PC-3 (cell line): ENCODE measurements at regions of chr21 and their contacts with region 1.

Region 1: DNA sequence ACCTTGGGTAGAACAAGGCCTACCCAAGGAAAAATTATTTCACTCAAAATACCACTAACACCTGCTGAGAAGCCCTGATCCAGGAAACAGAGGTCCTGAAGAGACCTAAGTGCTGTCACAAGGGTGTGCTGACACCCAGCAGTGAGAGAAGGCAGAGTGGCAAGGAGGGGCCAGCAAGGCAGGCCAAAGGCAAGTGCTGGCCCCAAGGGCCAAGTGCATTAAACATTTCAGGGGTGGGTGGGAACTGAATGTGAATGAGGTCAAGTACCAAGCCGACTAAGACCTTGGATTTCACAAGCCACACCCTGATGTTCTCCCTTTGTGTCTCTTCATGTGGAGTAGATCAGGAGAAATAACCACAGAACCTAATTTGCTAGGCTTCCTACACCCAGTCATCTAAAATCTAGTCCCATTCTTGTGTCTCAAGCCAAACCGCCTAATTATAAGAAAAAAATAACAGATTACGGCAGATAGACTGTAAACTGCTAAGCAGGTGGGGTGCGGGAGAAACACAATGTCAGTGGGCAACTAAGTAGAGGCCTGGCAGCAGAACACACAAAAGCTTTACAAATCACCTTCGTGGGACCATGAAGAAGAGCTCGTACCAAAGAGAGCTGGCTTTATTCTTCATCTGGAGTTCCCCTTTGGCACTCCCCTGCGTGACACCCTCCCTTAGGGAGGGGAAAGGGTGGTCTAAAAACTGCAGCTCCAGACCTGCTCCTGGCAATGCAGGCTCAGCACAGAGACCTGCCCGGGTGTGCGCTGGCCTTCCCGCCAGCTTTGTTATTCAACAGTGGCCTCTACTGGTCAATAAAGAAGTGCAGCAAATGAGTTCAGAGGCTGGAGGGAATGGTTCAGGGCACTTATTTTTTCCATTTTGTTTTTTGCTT is 8.7 kb downstream of the UBE2G2 start:
- DNase-seq: peak; percentile 83
- ATAC-seq: peak; percentile 97
- H3K4me3 ChIP-seq: no peak overlapping the region
- H3K27ac ChIP-seq: no peak overlapping the region
- H3K4me1 ChIP-seq: peaks cover 10% of the 10 kb centered on the region; the same call in 1 of the 2 replicates
- H3K27me3 ChIP-seq: no peaks in the 10 kb centered on the region
- CTCF ChIP-seq: peak; percentile 90

Region 2: GRCh38 chr21:44510508-44511210 is 282.3 kb before region 1 on chr21:
- CTCF ChIA-PET with region 1: interaction called, 20 read pairs
- POLR2A ChIA-PET with region 1: no interaction called
- intact Hi-C with region 1: loop called (anchors 1 kb)
- DNase-seq: peak; percentile 88
- ATAC-seq: peak; percentile 83
- H3K4me3 ChIP-seq: peak overlapping the region; percentile 71
- H3K27ac ChIP-seq: no peak overlapping the region
- H3K4me1 ChIP-seq: peaks cover 11% of the 10 kb centered on the region; the same call in 1 of the 2 replicates
- H3K27me3 ChIP-seq: no peaks in the 10 kb centered on the region
- CTCF ChIP-seq: peak; percentile 97

Region 3: DNA sequence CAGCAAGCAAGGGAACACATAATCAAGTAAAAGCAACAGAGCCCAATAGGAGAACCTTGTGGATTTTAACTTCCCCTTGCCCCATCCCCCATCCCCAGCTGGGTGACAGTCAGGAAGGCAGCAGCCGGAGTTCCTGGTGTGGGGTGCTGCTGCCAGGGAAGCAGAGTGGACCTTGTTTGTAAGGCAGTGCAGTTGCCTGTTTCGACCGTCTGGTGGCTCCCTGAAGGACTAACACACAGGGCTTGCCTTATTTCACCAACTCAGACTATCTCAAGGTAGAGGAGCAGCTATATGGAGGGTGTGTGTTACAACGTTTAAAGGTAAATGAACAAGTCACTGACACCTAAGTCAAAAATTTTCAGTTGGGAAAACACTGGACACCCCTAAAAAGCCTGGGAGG is 174.4 kb before region 1 on chr21:
- CTCF ChIA-PET with region 1: no interaction called
- POLR2A ChIA-PET with region 1: no interaction called
- intact Hi-C with region 1: loop called (anchors 1 kb)
- DNase-seq: peak; percentile 22
- ATAC-seq: peak; percentile 81
- H3K4me3 ChIP-seq: no peak overlapping the region
- H3K27ac ChIP-seq: no peak overlapping the region
- H3K4me1 ChIP-seq: no peaks in the 10 kb centered on the region
- H3K27me3 ChIP-seq: no peaks in the 10 kb centered on the region
- CTCF ChIP-seq: peak; percentile 47

Region 4: GRCh38 chr21:44686000-44686781 is 106.8 kb before region 1 on chr21:
- CTCF ChIA-PET with region 1: no interaction called
- POLR2A ChIA-PET with region 1: no interaction called
- intact Hi-C with region 1: no loop called
- DNase-seq: no peak
- ATAC-seq: no peak
- H3K4me3 ChIP-seq: no peak overlapping the region
- H3K27ac ChIP-seq: no peak overlapping the region
- H3K4me1 ChIP-seq: no peaks in the 10 kb centered on the region
- H3K27me3 ChIP-seq: no peaks in the 10 kb centered on the region
- CTCF ChIP-seq: no peak

Region 5: GRCh38 chr21:44697811-44698734 is 94.9 kb before region 1 on chr21:
- CTCF ChIA-PET with region 1: no interaction called
- POLR2A ChIA-PET with region 1: no interaction called
- intact Hi-C with region 1: no loop called
- DNase-seq: no peak
- ATAC-seq: no peak
- H3K4me3 ChIP-seq: no peak overlapping the region
- H3K27ac ChIP-seq: no peak overlapping the region
- H3K4me1 ChIP-seq: no peaks in the 10 kb centered on the region
- H3K27me3 ChIP-seq: no peaks in the 10 kb centered on the region
- CTCF ChIP-seq: no peak